Endothelial cell of umbilical vein (primary cell): ENCODE measurements at regions of chr9 and their contacts with region 1.

Region 1: GRCh38 chr9:37645903-37646506 is 4.7 kb upstream of the FRMPD1 start:
- DNase-seq: no peak
- H3K4me3 ChIP-seq: no peak overlapping the region
- H3K27ac ChIP-seq: no peak overlapping the region
- H3K4me1 ChIP-seq: peaks cover 2% of the 10 kb centered on the region
- H3K27me3 ChIP-seq: peaks cover 35 to 55% of the 10 kb centered on the region in 2 experiments
- CTCF ChIP-seq: no peak
- POLR2A ChIP-seq: no peak

Region 2: DNA sequence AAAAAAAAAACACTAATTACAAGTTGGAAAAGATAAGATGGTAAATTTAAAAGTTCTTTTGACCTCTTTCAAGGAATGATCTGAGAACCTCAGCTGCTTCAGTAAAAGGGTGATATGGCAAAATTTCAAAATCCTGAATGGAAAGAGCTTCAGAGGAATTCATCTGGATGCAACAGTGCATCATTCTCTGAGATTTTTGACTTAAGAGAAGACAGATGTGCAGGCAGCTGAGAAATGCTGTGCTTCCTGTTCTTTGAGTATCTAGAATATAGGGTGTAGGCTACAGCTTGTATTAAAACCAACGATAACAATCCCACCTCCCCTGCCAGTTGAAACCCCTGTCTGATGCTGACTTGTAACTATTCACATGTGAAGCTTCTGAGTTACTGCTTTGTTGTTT is 10.9 kb after region 1 on chr9:
- CTCF ChIA-PET with region 1: interaction called, 12 read pairs
- POLR2A ChIA-PET with region 1: no interaction called
- dilution Hi-C with region 1: no loop called
- intact Hi-C with region 1: no loop called
- DNase-seq: no peak
- H3K4me3 ChIP-seq: no peak overlapping the region
- H3K27ac ChIP-seq: no peak overlapping the region
- H3K4me1 ChIP-seq: no peaks in the 10 kb centered on the region
- H3K27me3 ChIP-seq: peaks cover 21 to 35% of the 10 kb centered on the region in 2 experiments
- CTCF ChIP-seq: no peak
- POLR2A ChIP-seq: no peak

Region 3: DNA sequence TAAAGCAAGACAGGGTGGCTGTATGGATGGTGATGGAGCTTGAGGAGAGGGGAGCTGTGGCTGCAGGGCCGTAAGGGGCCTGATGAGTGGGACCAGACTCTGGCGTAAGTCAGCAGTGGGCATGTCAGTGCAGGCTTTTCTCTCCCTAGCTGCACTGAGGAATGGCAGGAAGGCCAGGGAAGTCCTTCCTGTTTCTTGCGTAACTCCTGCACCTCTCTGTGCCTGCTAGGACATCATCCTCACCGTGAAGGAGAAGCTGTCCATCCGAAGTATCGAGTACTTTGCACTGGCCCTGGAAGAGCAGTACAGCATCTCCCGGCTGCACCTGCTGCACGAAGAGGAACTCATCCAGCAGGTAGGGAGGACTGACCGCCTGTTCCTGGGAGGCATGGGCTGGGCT is 83.5 kb after region 1 on chr9:
- CTCF ChIA-PET with region 1: no interaction called
- POLR2A ChIA-PET with region 1: no interaction called
- dilution Hi-C with region 1: no loop called
- intact Hi-C with region 1: loop called (anchors 10 kb)
- DNase-seq: no peak
- H3K4me3 ChIP-seq: no peak overlapping the region
- H3K27ac ChIP-seq: no peak overlapping the region
- H3K4me1 ChIP-seq: no peaks in the 10 kb centered on the region
- H3K27me3 ChIP-seq: peaks cover 14 to 17% of the 10 kb centered on the region in 2 experiments
- CTCF ChIP-seq: no peak
- POLR2A ChIP-seq: no peak